GM18951 (cell line): ENCODE measurements at regions of chr6 and their contacts with region 1.

Region 1: DNA sequence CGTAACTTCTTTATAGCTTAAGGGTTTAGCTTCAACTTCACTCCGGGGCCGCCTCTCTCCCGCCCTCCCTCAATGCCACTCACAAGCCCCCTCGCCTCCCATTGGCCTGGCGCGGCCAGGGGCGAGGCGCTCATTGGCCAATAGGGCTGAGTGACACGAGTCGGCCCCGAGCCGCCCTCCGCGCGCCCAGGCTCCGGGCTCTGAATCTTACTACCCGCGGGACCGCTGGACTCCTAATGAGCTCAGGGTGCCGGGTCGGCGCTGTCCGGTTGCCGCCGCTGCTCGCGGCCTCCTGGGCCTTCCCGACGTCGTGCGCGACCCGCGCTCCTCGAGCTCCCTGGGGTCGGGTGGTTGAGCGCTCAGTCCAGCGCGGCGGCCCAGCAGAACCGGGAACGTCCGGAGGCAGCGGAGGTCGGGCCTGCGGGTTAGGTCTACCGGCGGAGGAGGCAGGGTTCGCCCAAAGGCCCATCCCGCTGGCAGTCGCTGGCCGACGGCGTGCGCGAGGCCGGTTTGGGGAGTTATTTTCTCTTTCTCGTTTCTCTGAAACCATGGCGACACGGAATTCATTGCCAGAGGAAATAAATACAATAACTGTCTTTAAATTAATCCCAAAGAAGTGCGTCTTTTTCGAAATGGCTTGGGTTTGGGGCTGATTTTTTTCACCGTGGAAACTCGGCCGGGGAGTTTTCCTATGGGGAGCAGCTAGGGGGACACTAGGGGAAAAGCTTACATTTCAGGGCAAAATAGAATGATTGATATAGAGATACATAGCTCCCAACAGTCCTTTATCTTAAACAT is at the start of gene SIM1:
- POLR2A ChIP-seq: no peak

Region 2: DNA sequence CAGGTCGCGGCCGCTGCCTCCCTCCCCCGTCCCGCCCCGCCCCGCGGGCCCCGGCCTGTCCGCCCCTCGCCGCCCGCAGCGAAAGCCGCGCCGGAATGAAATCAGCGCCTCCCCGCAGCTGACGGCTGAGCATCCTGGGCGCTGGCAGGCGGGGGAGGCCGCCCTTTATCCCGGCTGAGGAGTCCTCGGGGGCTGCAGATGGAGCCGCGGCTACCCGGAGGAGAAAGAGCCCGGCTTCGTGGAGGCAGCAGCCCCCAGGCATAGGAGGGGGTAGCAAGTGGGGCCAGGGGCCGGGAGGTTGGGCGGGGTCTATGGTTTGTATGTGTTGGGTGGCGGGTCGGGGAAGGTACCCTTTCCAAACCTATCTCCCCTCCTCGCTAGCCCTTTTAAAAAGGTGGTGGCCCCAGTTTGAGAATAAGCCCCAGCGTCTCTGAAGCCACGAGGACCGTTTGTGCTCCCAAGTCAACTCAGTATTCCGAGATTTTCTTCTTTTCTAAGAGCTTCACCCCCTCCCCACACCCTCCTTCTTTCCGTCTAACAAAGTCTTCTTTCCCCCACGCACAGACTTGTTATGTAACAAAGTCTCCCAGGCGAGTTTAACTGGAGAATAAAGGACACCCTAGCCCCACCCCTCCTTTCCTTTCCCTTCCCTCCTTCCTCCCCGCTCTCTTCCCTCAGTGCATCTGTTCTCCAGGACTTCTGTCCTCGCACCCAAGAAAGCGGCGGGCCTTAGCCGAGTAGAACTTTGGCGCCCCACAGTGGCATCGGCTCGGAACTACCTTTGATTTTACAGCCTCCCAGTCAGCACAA is 1619.7 kb before region 1 on chr6:
- in situ Hi-C with region 1: loop called (anchors 25 kb)
- POLR2A ChIP-seq: no peak

Region 3: GRCh38 chr6:99588618-99589289 is 876.3 kb before region 1 on chr6:
- in situ Hi-C with region 1: loop called (anchors 25 kb)
- POLR2A ChIP-seq: no peak

Region 4: DNA sequence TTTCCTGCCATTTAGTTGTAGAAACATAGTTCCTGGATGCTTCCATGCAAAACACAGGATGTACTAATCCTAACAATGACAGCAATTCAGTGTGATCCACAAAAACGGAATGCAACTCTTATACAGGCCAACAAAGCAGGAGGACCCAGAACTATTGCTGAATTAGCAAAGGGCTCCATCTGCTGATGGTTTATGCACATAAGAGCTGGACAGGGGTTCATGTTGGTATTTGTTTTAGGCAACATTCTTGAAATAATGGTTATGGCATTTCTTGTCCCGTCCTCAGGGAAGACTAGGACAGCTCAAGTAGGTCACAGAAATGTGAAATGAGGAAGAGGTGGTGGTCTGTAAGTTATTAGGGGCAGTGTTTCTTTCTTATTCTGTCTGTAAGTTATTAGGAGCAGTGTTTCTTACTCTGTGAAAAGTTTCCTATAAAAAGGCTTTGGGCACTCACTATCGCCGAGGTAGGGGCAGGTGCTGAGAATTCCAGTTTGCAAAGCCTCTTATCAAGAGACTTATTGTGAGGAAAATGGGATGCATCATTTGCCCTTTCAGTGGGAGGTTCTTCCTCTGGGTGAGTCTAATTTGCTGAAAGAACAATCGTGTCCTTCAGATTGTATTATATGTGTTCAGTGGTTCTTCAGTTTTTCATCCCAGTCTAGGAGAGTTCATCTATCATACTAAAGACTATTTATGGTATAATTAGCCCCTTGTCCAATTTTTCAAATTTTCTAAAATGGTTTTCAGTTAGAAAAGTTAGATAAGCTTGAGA is 642.2 kb before region 1 on chr6:
- in situ Hi-C with region 1: no loop called
- POLR2A ChIP-seq: no peak

Region 5: DNA sequence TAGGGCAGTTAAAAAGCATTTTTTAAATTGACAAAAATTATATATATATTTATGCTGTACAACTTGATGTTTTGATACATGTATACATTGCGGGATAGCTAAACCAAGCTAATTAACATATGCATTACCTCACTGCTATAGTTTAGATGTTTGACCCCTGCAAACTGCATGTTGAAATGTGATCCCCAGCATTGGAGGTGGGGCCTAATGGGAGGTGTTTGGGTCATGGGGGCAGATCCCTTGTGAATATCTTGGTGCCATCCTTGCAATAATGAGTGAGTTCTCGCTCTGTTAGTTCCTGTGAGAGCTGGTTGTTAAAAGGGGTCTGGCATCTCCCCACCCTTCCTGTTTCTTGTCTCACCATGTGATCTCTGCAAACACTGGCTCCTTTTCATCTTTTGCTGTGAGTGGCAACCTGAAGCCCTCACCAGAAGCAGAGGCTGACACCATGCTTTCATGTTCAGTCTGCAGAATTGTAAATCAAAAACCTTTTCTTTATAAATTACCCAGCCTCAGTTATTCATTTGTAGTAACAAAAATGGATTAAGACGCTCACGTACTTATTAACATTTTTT is 582.9 kb before region 1 on chr6:
- in situ Hi-C with region 1: loop called (anchors 25 kb)
- POLR2A ChIP-seq: no peak

Region 6: GRCh38 chr6:100593522-100593921 is 128.4 kb after region 1 on chr6:
- in situ Hi-C with region 1: no loop called
- POLR2A ChIP-seq: no peak

Region 7: DNA sequence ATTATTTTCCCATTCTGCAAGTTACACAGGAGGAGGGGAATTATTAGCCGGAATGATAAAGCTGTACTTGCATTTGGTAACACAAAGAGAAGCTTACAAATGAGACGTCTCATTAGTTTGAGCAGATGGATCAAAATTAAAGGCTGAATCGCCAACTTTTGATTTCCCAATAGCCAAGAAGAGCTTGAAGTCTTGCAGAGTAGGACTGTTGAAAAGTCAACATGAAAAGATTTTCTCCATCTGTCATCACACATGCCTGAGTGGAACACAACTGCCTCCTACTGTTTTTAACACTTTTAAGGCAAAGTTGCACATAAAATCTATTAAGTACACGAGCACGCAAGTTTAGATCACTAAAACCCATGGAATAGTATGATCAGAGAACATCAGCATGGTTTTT is 239.9 kb after region 1 on chr6:
- in situ Hi-C with region 1: no loop called
- POLR2A ChIP-seq: no peak